ENCODE measurements at regions of chr9 and their contacts with region 1.

Region 1: DNA sequence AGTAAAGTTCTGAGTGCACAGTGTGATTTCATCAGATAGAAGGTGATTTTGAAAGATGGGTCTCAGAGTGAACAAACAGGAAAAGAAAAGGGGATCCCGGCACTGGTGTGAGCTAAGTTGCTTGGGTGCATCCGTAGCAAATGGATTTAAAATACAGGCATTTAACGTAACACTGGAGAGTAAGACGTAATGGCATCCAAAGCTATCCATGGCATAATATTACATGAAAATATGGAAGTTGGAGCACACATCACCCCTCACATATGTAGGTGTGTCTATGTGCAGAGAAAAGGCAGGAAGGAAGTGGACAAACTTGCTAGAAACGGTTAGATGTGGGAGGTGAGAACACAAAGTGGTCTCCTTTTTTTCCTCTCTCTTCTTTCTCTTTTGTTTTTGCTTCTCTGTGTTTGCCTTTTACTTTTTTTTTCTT is 38.2 kb upstream of the SEMA4D start:
- DNase-seq: no peak
- H3K4me3 Mint-ChIP-seq: peak overlapping the region; percentile 61
- H3K27ac Mint-ChIP-seq: peak overlapping the region; percentile 90
- H3K4me1 Mint-ChIP-seq: peaks cover 81% of the 10 kb centered on the region
- H3K27me3 Mint-ChIP-seq: no peaks in the 10 kb centered on the region

Region 2: DNA sequence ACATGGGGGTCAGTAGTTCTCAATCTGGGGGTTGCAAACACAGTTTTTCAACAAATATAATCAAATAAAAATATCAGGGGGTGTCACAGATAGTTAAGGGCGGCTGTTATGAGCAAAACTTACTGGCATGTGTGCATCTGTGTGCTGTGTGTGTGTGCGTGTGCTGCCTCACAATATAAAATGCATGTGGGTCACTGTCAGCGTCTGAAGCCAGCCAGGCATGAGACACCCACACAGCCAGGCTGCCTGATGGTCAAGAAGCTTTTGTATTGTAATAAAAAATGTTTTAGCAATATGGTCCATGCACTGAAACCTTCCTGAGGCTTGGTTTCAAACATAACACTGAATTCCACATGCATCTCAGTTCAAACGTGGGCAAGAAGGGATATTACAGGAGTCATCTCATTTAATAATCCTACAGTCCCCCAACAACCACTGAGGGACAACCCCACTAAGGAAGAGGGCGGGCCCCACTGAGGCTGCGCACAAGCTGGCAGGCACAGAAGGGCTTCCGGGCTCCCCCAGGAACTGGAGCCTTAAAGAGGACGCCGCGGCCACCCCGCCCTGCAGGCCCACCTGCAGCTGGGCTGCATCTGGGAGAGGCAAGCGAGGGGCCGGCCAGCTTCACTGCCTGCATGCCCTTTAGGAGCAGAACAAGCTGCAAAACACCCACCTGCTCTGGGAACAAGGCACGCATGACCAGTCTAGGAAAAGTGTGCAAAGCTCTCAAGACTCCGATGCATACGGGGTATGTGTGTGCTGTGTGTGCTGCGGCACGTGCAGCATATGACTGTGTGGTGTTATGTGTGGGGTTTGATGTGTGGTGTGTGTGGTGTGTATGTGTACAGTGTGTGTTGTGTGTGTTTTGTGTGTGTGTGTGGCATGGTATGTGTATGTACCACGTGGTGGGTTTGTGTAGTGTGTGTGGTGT is 52.3 kb before region 1 on chr9:
- CTCF ChIA-PET with region 1: no interaction called
- POLR2A ChIA-PET with region 1: no interaction called
- intact Hi-C with region 1: loop called (anchors 1 kb)
- DNase-seq: peak; percentile 74
- H3K4me3 Mint-ChIP-seq: peak overlapping the region; percentile 87
- H3K27ac Mint-ChIP-seq: peak overlapping the region; percentile 90
- H3K4me1 Mint-ChIP-seq: peaks cover 89% of the 10 kb centered on the region
- H3K27me3 Mint-ChIP-seq: no peaks in the 10 kb centered on the region

Region 3: GRCh38 chr9:89489548-89490530 is 46.3 kb before region 1 on chr9:
- CTCF ChIA-PET with region 1: no interaction called
- POLR2A ChIA-PET with region 1: interaction called, 3 read pairs
- intact Hi-C with region 1: loop called (anchors 2 kb)
- DNase-seq: peak; percentile 9
- H3K4me3 Mint-ChIP-seq: peak overlapping the region; percentile 39
- H3K27ac Mint-ChIP-seq: peak overlapping the region; percentile 70
- H3K4me1 Mint-ChIP-seq: peaks cover 94% of the 10 kb centered on the region
- H3K27me3 Mint-ChIP-seq: no peaks in the 10 kb centered on the region

Region 4: DNA sequence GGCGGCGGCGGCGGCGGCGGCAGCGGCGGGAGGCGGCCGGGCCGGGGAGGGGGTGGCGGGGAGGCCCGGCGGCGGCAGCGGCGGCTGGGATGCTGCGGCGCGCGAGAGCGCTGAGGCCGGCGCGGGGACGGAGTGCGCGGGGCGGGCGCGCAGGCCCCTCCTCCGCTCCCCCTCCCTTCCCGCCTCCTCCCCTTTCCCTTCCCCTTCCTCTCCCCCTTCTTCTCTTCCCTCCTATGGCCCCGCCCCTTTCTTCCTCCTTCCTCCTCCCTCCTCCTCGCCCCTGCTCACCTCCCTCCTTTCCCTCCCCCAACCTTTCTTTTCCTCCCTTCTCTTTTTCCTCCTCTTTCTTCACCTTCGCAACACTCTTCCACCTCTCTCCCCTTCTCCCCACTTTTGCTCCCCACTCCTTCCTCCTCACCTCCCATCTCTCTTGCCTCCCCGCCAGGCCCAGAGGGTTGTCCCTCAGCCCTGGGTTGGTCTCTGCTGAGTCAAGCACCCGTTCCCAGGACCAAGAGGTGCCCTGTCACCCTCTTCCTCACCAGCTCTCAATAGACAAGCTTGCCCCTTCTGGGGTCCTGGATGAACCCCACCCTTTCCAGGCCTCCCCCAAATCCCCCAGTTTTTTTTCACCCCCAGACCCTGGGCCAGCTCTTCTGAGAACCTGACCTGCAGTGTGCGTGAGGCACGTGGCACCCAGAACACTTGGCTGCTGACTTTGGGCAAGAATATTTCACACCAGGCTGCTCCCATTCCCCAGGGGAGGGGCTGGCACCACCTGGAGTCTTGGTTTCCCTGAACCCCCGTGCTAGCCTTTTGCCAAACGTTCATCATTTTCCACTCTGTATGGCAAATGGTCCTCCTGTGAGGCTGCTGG is 37.9 kb before region 1 on chr9 and contains the start of gene SEMA4D:
- CTCF ChIA-PET with region 1: no interaction called
- POLR2A ChIA-PET with region 1: no interaction called
- intact Hi-C with region 1: loop called (anchors 1 kb)
- DNase-seq: peak; percentile 81
- H3K4me3 Mint-ChIP-seq: peak within 1 kb of the TSS; percentile 81
- H3K27ac Mint-ChIP-seq: peak within 1 kb of the TSS; percentile 90
- H3K4me1 Mint-ChIP-seq: peaks cover 73% of the 10 kb centered on the region
- H3K27me3 Mint-ChIP-seq: no peaks in the 10 kb centered on the region
- total RNA-seq, gene SEMA4D: 159 to 161 TPM

Region 5: DNA sequence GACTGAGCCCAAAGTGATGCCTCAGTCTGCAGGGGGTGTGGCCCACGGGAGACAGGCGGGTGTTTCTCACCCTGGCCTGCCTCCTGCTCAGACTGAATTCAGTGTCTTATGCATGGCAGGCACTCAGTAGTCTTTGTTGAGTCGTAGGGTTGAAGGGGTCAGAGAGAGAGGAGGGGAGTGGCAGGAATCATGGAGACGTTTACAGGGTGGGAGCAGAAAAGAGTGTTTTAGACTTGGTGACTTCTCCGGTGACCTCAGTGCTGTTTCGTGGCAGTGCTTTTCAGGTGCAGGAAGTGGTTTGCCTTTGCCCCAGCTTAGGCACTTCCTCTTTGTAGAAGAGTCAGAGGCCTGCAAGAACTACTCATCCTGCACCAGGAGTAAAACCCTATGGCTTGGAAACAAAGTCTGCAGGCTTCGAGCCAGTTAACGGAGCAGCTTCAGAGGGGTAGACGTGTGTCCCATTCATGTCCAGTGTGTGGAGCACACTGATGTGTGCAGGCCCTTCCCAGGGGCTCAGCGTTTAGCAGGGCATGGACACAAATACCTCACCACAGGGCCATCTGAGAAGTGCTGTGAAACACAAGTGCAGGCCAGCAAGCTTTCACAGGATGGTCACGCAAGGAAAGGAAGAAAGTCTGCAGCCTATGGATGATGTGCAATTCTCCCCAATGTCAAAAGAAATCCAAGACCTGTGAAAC is 13.8 kb before region 1 on chr9:
- CTCF ChIA-PET with region 1: interaction called, 4 read pairs
- POLR2A ChIA-PET with region 1: interaction called, 3 read pairs
- intact Hi-C with region 1: loop called (anchors 1 kb)
- DNase-seq: peak; percentile 89
- H3K4me3 Mint-ChIP-seq: peak overlapping the region; percentile 58
- H3K27ac Mint-ChIP-seq: peak overlapping the region; percentile 92
- H3K4me1 Mint-ChIP-seq: peaks cover 89% of the 10 kb centered on the region
- H3K27me3 Mint-ChIP-seq: no peaks in the 10 kb centered on the region

Measured in activated CD4-positive, alpha-beta memory T cell treated with anti-CD3 and anti-CD28 coated beads for 36 hours (primary cell).